ENCODE measurements at regions of chr4 and their contacts with region 1.

Region 1: DNA sequence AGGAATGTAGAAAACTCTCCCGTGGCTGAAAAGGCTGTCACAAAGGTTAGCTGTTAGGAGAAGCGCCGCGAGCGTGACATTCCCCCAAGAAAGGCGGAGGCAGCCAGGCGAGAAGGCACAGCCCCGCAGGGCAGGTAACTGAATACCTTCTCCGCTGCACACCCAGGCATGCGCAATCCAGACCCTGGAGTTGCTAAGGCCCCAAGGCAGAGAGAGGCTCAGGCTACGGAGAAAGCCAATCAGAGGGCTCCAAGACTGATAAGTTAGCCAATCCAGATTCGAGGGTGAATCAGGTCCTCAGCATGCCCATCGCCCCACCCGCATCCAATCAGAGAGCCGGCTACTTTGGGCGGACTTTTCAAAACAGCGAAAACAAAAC is 485 bp upstream of the CCNG2 start:
- DNase-seq: peak; percentile 94
- ATAC-seq: peak; percentile 96
- H3K4me3 ChIP-seq: peak overlapping the region; percentile 69 to 82
- H3K27ac ChIP-seq: peak overlapping the region; percentile 89
- H3K4me1 ChIP-seq: peaks cover 4% of the 10 kb centered on the region; the same call in 1 of the 2 replicates
- H3K27me3 ChIP-seq: no peaks in the 10 kb centered on the region
- CTCF ChIP-seq: no peak

Region 2: DNA sequence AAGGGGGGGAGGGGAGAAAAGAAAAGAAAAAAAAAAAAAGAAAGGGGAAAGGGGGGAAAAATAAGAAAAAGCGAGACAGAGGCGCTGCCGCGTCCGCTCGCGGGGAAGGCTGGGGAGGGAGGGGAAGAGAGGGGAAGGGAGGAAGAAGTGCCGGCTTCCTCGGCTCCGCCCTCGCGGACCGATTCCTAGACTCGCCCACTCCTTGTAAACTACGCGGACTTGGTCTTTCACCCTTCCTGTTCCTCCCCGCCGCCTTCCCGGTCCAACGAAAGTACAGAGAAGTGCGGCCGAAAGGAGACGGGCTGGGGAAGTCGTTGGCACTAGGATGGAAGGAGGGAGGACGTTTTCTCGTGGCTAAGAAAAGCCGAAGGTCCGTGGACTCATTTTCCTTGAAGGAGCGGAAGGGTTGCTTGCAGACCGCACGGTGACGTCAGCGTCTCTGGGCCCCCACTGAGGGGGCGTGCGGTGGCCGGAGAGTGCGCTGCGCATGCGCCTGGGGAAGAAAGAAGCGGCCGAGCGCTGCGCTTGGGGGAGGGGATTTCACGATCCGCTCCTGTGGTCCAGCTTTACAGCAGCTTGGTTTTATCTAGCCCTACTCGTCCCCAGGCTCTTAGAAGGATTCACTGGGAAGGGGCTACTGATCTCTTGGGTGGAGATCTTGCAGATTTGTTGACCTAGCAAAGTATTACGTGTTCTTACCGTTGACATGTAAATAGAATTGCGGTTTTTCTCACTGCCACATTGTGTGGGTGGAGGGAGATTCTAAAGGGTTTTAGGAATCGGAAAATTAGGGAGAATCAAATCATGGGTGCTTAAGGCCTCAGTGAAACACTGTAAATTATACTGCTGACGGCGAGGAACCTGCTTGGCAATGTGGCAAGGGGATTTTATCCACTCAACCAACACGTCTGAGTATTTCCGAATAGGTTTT is 80.4 kb before region 1 on chr4 and contains the start of gene CCNI:
- CTCF ChIA-PET with region 1: no interaction called
- POLR2A ChIA-PET with region 1: no interaction called
- in situ Hi-C with region 1: no loop called
- intact Hi-C with region 1: loop called (anchors 5 kb)
- DNase-seq: peak; percentile 87
- ATAC-seq: peak; percentile 94
- H3K4me3 ChIP-seq: peak within 1 kb of the TSS; percentile 57 to 96
- H3K27ac ChIP-seq: peak within 1 kb of the TSS; percentile 97
- H3K4me1 ChIP-seq: peaks cover 15% of the 10 kb centered on the region
- H3K27me3 ChIP-seq: no peaks in the 10 kb centered on the region
- CTCF ChIP-seq: no peak
- total RNA-seq, gene CCNI: 125 TPM

Region 3: DNA sequence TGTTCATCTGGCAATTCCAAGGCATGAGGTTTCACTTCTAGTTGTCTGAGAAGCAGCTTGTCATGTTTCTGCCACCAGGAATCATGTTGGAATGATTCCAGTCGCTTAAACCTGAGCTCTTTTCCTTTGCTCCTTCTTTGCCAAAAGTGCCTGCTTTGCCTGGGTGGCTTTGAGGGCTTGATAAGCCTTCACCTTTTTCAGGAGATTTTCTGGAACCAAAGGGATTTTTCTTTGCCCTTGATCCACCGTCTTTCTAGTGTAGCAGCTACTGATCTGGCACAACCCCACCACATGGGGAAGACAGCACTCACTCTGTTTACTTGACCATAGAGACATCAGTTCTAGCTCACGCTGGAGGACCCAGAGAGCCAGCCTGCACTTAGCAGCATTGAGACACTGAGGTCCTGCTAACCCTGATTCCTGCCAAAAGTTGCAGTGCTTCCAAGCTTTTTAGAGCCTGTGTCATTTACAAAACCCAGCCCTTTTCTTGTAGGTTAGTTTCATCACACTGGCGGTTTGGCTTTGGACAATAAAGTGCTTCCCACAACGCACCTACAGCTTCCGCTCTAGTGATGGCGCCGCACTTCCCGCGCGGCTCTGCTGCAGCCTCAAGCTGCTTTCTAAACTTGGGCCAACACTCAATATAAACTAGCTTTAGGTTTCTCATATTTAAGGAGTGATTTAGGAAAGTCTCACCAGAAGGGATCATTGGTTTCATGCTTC is 73.5 kb before region 1 on chr4:
- CTCF ChIA-PET with region 1: no interaction called
- POLR2A ChIA-PET with region 1: interaction called, 23 read pairs
- in situ Hi-C with region 1: no loop called
- intact Hi-C with region 1: loop called (anchors 5 kb)
- DNase-seq: no peak
- ATAC-seq: no peak
- H3K4me3 ChIP-seq: no peak overlapping the region
- H3K27ac ChIP-seq: no peak overlapping the region
- H3K4me1 ChIP-seq: no peaks in the 10 kb centered on the region
- H3K27me3 ChIP-seq: no peaks in the 10 kb centered on the region
- CTCF ChIP-seq: no peak

Region 4: DNA sequence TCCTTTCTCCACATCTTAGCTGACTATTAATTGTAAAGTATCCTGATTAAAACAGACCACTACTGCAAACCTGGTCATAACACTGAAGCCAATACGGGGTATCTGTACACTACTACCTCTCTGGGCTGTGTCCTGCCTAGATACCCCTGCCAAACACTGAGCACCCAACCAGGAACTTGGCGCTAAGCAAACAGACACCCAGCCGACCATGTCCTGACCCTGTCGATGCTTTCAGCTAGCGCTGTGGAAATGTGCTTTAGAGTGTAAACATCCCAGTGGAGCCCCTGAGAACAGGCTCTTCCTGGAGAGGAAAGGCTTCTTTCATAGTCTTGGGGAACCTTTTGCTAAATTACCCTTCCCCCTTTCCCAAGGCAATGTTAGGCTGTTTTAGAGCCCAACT is 53.4 kb after region 1 on chr4:
- CTCF ChIA-PET with region 1: no interaction called
- POLR2A ChIA-PET with region 1: no interaction called
- in situ Hi-C with region 1: no loop called
- intact Hi-C with region 1: no loop called
- DNase-seq: no peak
- ATAC-seq: no peak
- H3K4me3 ChIP-seq: no peak overlapping the region
- H3K27ac ChIP-seq: no peak overlapping the region
- H3K4me1 ChIP-seq: no peaks in the 10 kb centered on the region
- H3K27me3 ChIP-seq: no peaks in the 10 kb centered on the region
- CTCF ChIP-seq: no peak